ENCODE measurements at regions of chr9 and their contacts with region 1.

Region 1: DNA sequence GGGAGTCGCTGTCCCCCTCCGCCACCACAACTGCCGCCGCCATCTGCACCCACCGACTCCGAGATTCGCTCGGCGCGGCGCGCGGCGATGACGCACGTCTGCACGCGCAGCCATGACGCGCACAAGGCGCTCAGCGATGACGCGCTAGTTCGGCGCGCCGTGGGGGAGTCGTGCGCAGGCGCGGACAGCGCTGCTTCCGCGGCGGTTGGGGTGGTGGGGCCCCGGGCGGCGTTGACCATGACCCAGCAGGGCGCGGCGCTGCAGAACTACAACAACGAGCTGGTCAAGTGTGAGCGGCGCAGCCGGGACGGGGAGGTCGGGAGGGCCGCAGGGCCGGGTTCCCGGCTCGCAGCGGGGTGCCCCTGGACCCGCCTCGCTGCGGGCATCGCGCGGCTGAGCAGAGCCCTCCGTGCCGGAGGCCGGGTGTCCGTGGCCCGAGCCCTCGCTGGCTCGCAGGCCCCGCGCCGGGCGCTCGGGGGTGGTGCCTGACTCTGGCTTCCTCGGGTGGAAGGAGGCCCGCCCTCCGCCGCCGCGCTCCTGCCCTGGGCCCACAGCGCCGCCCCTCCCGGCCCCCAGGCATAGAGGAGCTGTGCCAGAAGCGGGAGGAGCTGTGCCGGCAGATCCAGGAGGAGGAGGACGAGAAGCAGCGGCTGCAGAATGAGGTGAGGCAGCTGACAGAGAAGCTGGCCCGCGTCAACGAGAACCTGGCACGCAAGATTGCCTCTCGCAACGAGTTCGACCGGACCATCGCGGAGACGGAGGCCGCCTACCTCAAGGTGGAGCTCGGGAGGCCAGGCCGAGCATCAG is at the starts of genes ANAPC2 and SSNA1:
- DNase-seq: peak; percentile 81
- H3K4me3 ChIP-seq: peak within 1 kb of the TSS; percentile 94
- H3K27ac ChIP-seq: peak within 1 kb of the TSS; percentile 96
- H3K27me3 ChIP-seq: no peaks in the 10 kb centered on the region
- CTCF ChIP-seq: peak; percentile 58
- polyA plus RNA-seq, gene ANAPC2: 12.1 and 14.6 TPM in 2 replicates
- polyA plus RNA-seq, gene SSNA1: 35.0 and 46.9 TPM in 2 replicates

Region 2: DNA sequence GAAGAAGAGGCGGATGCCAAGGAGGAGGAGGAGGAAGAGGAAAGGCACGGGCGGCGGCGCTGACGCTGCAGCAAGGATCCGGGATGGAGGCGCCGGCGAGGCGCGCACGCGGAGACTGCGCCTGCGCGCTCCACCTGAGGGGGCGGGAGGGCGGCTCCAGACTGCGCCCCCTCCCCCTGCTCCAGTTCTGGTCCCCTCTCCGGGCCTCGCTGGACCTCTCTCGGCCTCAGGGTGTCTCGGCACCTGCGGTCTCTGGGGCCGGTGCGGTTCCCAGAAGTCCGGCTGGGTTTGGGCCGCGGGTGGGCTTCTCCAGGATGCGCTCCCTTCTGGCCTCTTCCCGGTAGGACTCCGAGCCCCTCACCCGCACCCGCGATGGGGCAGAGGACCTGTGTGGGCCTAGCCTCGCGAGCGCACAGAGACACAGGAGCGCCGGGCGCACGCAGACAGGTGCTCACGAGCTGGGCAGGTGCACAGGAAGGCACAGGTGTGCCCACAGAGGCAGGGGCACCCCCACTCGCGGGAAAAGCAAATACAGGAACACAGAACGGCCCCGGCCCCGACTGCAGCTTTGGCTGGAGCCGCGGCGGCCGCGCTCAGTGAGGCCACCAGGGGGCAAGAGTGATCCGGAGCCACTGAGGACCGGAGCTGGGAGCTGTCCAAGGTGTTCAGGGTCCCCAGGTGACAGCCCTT is 142.4 kb before region 1 on chr9 and contains the start of gene NPDC1:
- CTCF ChIA-PET with region 1: no interaction called
- POLR2A ChIA-PET with region 1: no interaction called
- DNase-seq: no peak
- H3K4me3 ChIP-seq: peak within 1 kb of the TSS; percentile 68
- H3K27ac ChIP-seq: no peak within 1 kb of the TSS
- H3K27me3 ChIP-seq: peaks cover 29% of the 10 kb centered on the region
- CTCF ChIP-seq: peak; percentile 87
- polyA plus RNA-seq, gene NPDC1: 8.9 and 16.5 TPM in 2 replicates

Region 3: GRCh38 chr9:137086531-137087408 is 101.9 kb before region 1 on chr9 and contains the start of gene MAN1B1:
- CTCF ChIA-PET with region 1: no interaction called
- POLR2A ChIA-PET with region 1: interaction called, 12 read pairs
- DNase-seq: peak; percentile 97
- H3K4me3 ChIP-seq: peak within 1 kb of the TSS; percentile 76
- H3K27ac ChIP-seq: peak within 1 kb of the TSS; percentile 75
- H3K27me3 ChIP-seq: no peaks in the 10 kb centered on the region
- CTCF ChIP-seq: no peak
- polyA plus RNA-seq, gene MAN1B1: 40.8 and 50.2 TPM in 2 replicates

Region 4: DNA sequence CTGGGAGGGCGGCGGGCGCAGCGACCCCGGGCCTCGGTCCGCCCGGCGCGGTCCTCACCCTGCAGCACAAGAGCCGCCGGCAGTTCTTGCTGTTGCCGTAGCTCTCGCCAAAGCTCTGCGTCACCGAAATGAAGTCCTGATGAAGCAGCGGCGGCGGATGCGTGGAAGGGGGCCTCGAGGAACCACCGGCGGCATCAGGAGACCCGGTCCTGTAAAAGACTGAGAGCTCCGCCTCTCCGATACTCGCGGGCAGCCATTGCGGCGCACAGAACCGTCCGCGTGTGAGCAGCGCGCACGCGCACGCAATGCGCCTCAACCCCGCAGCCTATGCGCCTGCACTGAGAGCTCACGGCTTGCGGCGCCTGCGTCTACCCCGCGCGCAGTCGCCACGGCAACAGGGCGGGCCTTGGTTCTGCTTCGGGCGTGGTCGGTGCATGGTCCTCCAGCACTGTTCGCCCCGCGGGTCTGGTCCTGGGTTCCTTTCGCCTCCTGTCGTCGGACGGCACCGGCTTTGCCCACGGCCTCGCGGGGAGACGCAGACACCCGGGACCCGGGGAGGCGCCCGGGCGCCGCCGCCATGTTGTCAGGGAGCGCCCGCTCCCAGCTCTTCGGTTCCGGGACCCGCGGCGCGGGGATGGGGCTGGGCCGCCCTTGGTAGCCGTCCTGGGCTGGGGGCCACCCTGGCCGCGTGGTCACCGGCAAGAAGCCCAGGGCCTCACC is 59.1 kb before region 1 on chr9:
- CTCF ChIA-PET with region 1: interaction called, 3 read pairs
- POLR2A ChIA-PET with region 1: interaction called, 13 read pairs
- DNase-seq: peak; percentile 75
- H3K4me3 ChIP-seq: peak overlapping the region; percentile 77
- H3K27ac ChIP-seq: peak overlapping the region; percentile 31
- H3K27me3 ChIP-seq: no peaks in the 10 kb centered on the region
- CTCF ChIP-seq: no peak

Region 5: GRCh38 chr9:137176302-137177182 is 12.2 kb before region 1 on chr9:
- CTCF ChIA-PET with region 1: interaction called, 8 read pairs
- POLR2A ChIA-PET with region 1: interaction called, 10 read pairs
- DNase-seq: no peak
- H3K4me3 ChIP-seq: no peak overlapping the region
- H3K27ac ChIP-seq: no peak overlapping the region
- H3K27me3 ChIP-seq: peaks cover 14% of the 10 kb centered on the region
- CTCF ChIP-seq: peak; percentile 69

Region 6: DNA sequence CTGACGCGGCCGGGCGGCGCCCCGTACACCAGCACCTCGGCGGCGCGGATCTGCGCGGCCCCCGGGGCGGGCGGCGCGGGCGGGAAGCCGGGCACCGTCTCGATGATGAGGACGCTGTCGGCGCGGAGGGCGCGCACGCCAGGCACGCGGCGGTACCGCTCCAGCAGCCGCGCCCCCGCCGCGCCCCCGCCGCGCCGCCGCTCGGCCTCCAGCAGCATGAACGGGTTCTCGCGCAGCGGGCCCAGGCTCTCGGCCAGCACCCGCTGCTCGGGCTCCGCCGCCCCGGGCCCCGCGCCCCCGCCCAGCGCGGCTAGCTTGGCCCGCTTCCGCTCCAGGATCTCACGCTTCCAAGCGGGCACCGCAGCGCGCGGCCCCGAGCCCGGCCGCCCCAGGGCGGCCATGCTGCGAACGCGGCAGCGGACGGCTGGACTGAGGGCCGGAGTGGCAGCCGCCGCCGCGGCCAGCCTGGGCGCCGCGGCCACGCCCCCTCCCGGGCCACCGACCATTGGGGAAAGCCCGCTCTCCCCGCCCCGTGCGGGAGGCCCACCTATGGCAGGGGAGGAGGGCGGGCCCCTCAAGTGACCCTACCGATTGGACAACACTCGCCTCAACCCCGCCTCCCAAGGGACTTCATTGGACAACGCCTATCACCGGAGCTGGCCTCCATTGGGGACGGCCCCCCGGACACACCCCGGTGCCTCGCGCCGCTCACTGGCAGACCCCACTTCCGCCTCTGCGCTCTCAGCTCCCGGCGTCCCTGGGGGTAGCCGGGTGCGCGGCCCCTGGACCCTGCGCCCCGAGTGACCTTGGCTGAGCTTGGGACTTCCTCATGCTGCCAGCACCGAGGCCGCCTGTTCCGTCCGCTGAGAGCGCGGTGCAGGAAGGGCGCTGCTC is 11.9 kb after region 1 on chr9 and contains the start of gene TPRN:
- CTCF ChIA-PET with region 1: interaction called, 6 read pairs
- POLR2A ChIA-PET with region 1: interaction called, 38 read pairs
- DNase-seq: peak; percentile 94
- H3K4me3 ChIP-seq: peak within 1 kb of the TSS; percentile 77
- H3K27ac ChIP-seq: no peak within 1 kb of the TSS
- H3K27me3 ChIP-seq: no peaks in the 10 kb centered on the region
- CTCF ChIP-seq: no peak
- polyA plus RNA-seq, gene TPRN: 2.8 and 3.8 TPM in 2 replicates

Region 7: DNA sequence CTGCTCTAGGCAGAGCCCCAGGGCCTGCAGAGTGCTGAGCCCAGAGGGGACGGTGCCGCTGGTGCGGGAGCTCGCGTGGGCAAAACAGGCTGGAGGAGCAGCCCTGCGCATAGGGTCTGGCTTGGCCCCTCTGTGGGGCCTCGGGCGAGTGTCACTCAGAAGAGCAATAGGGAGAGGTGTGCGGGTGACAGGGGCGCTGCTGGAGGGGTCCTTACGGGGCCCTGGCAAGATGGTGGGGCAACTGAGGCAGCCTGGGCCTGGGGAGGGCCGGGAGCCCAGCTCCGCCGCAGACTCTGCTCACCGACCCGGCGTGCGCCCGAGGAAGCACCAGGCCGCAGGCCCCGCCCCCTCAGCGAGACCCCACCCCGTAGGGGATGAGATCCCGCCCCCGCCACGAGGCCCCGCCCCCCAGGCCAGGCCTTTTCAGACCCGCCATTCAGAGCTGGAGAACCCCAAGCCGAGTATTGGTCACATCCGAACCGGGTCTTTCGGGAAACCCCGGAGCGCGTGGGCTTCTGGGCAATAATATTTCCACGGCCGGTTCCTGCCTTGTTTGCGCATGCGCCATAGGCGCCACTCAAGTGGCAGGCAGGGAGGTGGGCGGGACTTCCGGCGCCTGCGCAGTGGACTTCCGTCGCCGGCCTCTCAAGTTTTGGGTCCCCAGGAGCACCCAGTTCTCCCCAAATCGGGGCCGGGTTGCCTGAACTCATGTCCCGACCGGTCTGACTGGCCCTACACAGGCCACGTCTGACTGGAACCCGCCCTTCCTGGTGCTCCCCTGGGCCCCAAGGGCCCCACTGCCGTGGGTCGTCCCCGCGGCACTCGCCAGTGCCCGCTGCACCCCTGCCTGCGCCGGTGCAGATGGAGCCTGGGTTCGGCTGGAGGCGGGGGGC is 34.6 kb after region 1 on chr9:
- CTCF ChIA-PET with region 1: interaction called, 13 read pairs
- POLR2A ChIA-PET with region 1: interaction called, 13 read pairs
- DNase-seq: peak; percentile 96
- H3K4me3 ChIP-seq: peak overlapping the region; percentile 80
- H3K27ac ChIP-seq: peak overlapping the region; percentile 65
- H3K27me3 ChIP-seq: no peaks in the 10 kb centered on the region
- CTCF ChIP-seq: no peak

Region 8: DNA sequence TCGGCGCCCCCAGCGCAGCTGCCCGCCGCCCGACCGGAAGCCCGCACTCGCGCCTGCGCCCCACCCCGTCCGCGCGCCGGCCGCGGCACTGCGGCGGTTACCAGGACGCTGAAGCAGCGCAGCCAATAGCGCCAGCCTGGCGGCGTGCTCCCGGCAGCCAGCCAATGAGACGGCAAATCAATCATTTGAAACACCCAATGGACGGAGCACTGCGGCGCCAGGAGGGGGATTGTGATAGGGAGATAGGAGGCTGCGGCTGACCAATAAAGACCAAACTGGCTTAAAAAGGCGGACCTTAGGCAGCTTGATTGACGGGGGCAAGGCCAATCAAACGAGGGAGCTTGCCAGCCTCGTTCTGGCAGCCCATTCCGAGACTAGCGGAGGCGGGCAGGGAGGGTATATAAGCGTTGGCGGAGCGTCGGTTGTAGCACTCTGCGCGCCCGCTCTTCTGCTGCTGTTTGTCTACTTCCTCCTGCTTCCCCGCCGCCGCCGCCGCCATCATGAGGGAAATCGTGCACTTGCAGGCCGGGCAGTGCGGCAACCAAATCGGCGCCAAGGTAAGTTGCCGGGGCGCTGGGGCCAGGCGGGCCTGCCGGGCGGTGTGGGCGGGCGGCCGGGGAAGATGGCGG is 52.3 kb after region 1 on chr9 and contains the start of gene TUBB4B:
- CTCF ChIA-PET with region 1: interaction called, 17 read pairs
- POLR2A ChIA-PET with region 1: interaction called, 13 read pairs
- DNase-seq: peak; percentile 100
- H3K4me3 ChIP-seq: peak within 1 kb of the TSS; percentile 82
- H3K27ac ChIP-seq: peak within 1 kb of the TSS; percentile 83
- H3K27me3 ChIP-seq: no peaks in the 10 kb centered on the region
- CTCF ChIP-seq: no peak
- polyA plus RNA-seq, gene TUBB4B: 223 and 262 TPM in 2 replicates